ENCODE measurements at regions of chr18 and their contacts with region 1.

Region 1: DNA sequence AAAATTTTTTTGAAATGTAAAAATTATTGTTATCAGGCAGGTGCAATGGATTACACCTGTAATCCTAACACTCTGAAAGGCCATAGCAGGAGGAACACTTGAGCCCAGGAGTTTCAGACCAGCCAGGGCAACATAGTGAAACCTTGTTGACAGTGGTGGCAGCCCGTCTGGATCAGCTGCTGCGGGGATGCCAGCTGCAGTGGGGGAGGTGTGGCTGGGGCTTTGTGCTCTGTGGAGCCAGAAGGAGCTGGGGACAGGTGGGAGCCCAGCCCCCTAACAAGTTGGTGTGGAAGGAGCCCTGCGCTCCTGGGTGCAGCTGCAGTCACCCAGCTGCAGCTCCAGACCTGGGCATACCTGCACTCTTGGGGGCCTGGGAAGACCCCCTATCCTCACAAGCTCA is 182.4 kb upstream of the MC4R start:
- DNase-seq: no peak
- ATAC-seq: no peak
- H3K4me3 ChIP-seq: no peak overlapping the region
- H3K27ac ChIP-seq: no peak overlapping the region
- H3K4me1 ChIP-seq: no peaks in the 10 kb centered on the region
- H3K27me3 ChIP-seq: no peaks in the 10 kb centered on the region
- CTCF ChIP-seq: no peak

Region 2: GRCh38 chr18:59996370-59996966 is 558.5 kb before region 1 on chr18:
- intact Hi-C with region 1: loop called (anchors 10 kb)
- DNase-seq: no peak
- ATAC-seq: peak; percentile 69
- H3K4me3 ChIP-seq: no peak overlapping the region
- H3K27ac ChIP-seq: no peak overlapping the region
- H3K4me1 ChIP-seq: no peaks in the 10 kb centered on the region
- H3K27me3 ChIP-seq: peaks cover 4% of the 10 kb centered on the region
- CTCF ChIP-seq: peak; percentile 55

Measured in upper lobe of right lung (tissue), 1 donor.